Naive thymus-derived CD4-positive, alpha-beta T cell (primary cell): ENCODE measurements at regions of chr14 and their contacts with region 1.

Region 1: DNA sequence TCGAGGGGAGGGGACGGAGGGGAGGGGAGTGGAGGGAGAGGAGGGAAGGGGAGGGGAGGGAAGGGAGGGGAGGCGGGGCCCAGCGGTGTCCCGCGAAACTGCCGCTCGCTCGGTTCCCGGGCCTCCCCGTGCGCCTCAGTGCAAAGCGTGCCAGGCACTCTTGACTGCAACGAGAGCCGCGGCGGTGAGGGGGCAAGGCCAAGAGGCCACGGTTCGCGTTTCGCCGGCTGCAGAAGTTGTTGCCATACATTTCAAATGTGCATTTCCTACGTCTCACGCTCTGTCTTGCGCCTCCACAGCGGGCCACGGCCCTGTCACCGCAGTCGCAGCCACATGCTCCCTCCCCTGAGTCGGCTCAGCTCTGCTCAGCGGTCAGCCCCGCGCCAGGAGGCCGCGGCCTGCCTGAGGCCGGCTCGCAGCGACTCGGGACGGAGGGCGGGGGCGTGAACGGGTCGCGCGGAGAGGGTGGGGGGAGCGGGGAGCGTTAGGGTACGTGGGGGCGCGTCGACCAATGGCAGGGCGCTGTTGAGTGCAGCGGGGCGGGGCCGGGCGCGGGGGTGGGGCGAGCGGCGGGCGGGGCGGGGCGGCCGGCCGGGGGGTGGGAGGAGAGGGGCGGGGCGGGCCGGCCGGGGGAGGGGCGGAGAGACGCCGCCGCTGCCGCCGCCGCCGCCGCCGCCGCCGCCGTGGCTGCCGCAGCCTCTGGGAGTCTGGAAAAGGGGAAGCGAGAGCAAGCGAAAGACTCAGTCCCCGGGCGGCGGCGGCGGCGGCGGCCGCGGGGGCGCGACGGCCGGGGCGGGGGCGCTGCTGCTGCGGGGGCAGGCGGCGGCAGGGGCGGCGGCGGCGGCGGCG is at the start of gene PPP2R5C:
- DNase-seq: peak; percentile 73 to 90 (median 87)
- ATAC-seq: peak; percentile 73
- H3K4me3 ChIP-seq: peak within 1 kb of the TSS; percentile 94
- H3K4me3 Mint-ChIP-seq: peak within 1 kb of the TSS; percentile 89 to 96 (median 93)
- H3K27ac ChIP-seq: peak within 1 kb of the TSS; percentile 91
- H3K27ac Mint-ChIP-seq: peak within 1 kb of the TSS; percentile 69 to 95 (median 91)
- H3K4me1 ChIP-seq: peaks cover 11 to 14% of the 10 kb centered on the region in 2 donors
- H3K4me1 Mint-ChIP-seq: peaks cover 30 to 56% (median 38%) of the 10 kb centered on the region in 7 donors
- H3K27me3 ChIP-seq: no peaks in the 10 kb centered on the region
- H3K27me3 Mint-ChIP-seq: peaks cover 0 to 11% (median 0%) of the 10 kb centered on the region in 5 donors
- total RNA-seq, gene PPP2R5C: 266 to 449 (median 405) TPM

Region 2: GRCh38 chr14:101687756-101688546 is 73.3 kb before region 1 on chr14:
- CTCF ChIA-PET with region 1: no interaction called
- POLR2A ChIA-PET with region 1: no interaction called
- intact Hi-C with region 1: no loop called
- DNase-seq: no peak
- ATAC-seq: no peak
- H3K4me3 ChIP-seq: no peak overlapping the region
- H3K4me3 Mint-ChIP-seq: no peak overlapping the region
- H3K27ac ChIP-seq: no peak overlapping the region
- H3K27ac Mint-ChIP-seq: no peak overlapping the region
- H3K4me1 ChIP-seq: no peaks in the 10 kb centered on the region
- H3K4me1 Mint-ChIP-seq: no peaks in the 10 kb centered on the region
- H3K27me3 ChIP-seq: no peaks in the 10 kb centered on the region
- H3K27me3 Mint-ChIP-seq: peaks cover 0 to 32% (median 0%) of the 10 kb centered on the region in 5 donors

Region 3: DNA sequence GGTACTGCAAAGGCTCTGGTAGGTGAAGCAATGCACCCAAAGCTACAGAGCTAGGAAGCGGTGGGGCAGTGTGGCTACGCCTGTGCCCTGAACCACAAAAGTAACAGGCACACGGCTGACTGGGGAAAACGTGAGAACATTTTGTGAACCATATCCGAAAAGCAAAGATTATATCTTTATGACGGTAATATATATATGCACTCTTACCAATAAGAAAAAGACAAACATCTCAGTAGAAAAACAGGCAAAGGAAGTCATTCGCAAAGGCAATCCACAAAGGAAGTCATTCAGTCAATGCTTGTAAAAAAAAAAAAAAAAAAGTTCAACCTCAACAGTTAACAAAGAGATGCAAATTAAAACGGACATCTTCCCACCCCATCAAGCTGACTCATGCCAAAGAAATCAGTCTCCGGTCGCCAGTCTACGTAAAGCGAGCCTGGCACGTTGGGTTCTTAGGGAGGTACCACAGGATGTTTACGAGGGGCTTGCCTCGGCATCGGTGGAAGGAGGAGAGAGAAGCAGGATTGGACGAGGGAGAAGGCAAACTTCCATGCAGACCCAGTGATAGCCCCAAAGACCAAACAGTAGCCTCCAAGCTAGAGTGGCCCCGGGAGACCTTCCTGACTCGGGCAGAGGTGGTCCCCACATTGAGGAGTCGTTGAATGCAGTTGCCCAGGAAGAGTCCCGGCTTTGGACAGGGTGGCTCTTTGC is 39.1 kb before region 1 on chr14:
- CTCF ChIA-PET with region 1: no interaction called
- POLR2A ChIA-PET with region 1: interaction called, 19 read pairs
- intact Hi-C with region 1: loop called in 1 of 2 experiments (anchors 1 kb)
- DNase-seq: peak; percentile 49 to 93 (median 88)
- ATAC-seq: peak; percentile 86
- H3K4me3 ChIP-seq: peak overlapping the region; percentile 24
- H3K4me3 Mint-ChIP-seq: peak overlapping the region; percentile 73 to 92 (median 80)
- H3K27ac ChIP-seq: peak overlapping the region; percentile 76
- H3K27ac Mint-ChIP-seq: peak overlapping the region; percentile 92 to 99 (median 97)
- H3K4me1 ChIP-seq: peaks cover 34 to 50% of the 10 kb centered on the region in 2 donors
- H3K4me1 Mint-ChIP-seq: peaks cover 17 to 74% (median 52%) of the 10 kb centered on the region in 7 donors
- H3K27me3 ChIP-seq: no peaks in the 10 kb centered on the region
- H3K27me3 Mint-ChIP-seq: no peaks in the 10 kb centered on the region

Region 4: DNA sequence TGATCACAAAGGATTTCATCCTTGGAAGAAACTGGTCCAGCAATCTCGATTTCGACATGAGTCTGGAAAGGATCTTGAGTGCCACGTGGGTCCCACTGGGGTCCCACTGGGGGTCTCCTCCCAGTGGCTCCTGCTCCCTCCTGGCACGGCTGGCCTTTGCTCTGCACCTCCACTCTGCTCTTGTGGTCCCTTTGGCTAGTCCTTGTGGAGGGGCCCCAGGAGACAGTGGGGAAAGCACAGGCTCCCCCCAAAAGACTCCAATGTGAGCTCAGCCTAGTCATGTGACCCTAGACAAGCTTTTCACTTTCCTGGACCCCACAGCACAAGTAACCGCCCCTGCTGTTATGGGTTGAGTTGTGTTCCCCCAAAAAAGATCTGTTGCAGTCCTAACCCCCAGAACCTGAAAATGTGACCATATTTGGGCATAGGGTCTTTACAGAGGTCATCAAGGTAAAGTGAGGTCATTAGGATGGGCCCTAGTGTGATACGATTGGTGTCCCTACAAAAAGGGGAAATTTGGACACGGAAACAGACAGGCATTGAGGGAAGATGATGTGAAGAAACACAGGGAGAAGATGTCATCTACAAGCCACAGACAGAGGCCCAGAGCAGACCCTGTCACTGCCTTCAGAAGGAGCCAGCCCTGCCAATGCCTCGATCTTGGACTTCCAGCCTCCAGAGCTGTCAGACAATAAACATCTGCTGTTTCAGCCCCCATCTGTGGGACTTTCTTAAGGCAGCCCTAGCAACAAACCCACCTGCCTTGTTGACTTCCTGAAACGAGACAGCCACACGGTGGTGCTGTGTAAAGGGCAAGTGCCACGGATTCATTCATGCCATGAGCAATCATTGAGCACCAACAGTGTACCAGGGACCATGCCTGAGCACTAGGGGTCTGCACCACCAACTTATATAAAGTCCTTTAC is 23.6 kb before region 1 on chr14:
- CTCF ChIA-PET with region 1: interaction called, 4 read pairs
- POLR2A ChIA-PET with region 1: interaction called, 4 read pairs
- intact Hi-C with region 1: loop called in 1 of 2 experiments (anchors 2 kb)
- DNase-seq: peak in 4 of 9 donors; percentile 21 to 27 (median 24)
- ATAC-seq: peak; percentile 65
- H3K4me3 ChIP-seq: no peak overlapping the region
- H3K4me3 Mint-ChIP-seq: no peak overlapping the region
- H3K27ac ChIP-seq: no peak overlapping the region
- H3K27ac Mint-ChIP-seq: peak overlapping the region in 6 of 9 donors; percentile 20 to 76 (median 62)
- H3K4me1 ChIP-seq: peaks cover 1 to 14% of the 10 kb centered on the region in 2 donors
- H3K4me1 Mint-ChIP-seq: peaks cover 0 to 24% (median 12%) of the 10 kb centered on the region in 7 donors
- H3K27me3 ChIP-seq: no peaks in the 10 kb centered on the region
- H3K27me3 Mint-ChIP-seq: no peaks in the 10 kb centered on the region

Region 5: GRCh38 chr14:101876555-101876938 is 115.3 kb after region 1 on chr14:
- CTCF ChIA-PET with region 1: no interaction called
- POLR2A ChIA-PET with region 1: interaction called, 3 read pairs
- intact Hi-C with region 1: loop called in 1 of 2 experiments (anchors 5 kb)
- DNase-seq: peak in 8 of 9 donors; percentile 42 to 85 (median 68)
- ATAC-seq: peak; percentile 94
- H3K4me3 ChIP-seq: no peak overlapping the region
- H3K4me3 Mint-ChIP-seq: peak overlapping the region; percentile 43 to 87 (median 76)
- H3K27ac ChIP-seq: peak overlapping the region; percentile 72
- H3K27ac Mint-ChIP-seq: peak overlapping the region; percentile 72 to 95 (median 89)
- H3K4me1 ChIP-seq: peaks cover 24 to 52% of the 10 kb centered on the region in 2 donors
- H3K4me1 Mint-ChIP-seq: peaks cover 42 to 96% (median 78%) of the 10 kb centered on the region in 7 donors
- H3K27me3 ChIP-seq: no peaks in the 10 kb centered on the region
- H3K27me3 Mint-ChIP-seq: no peaks in the 10 kb centered on the region

Region 6: GRCh38 chr14:102086972-102087761 is 325.9 kb after region 1 on chr14 and contains the start of gene HSP90AA1:
- CTCF ChIA-PET with region 1: interaction called, 6 read pairs
- POLR2A ChIA-PET with region 1: no interaction called
- intact Hi-C with region 1: loop called (anchors 1 kb)
- DNase-seq: peak; percentile 89 to 99 (median 94)
- ATAC-seq: peak; percentile 87
- H3K4me3 ChIP-seq: peak within 1 kb of the TSS; percentile 91
- H3K4me3 Mint-ChIP-seq: peak within 1 kb of the TSS; percentile 90 to 98 (median 96)
- H3K27ac ChIP-seq: peak within 1 kb of the TSS; percentile 98
- H3K27ac Mint-ChIP-seq: peak within 1 kb of the TSS; percentile 93 to 98 (median 96)
- H3K4me1 ChIP-seq: peaks cover 41 to 43% of the 10 kb centered on the region in 2 donors
- H3K4me1 Mint-ChIP-seq: peaks cover 44 to 70% (median 62%) of the 10 kb centered on the region in 7 donors
- H3K27me3 ChIP-seq: no peaks in the 10 kb centered on the region
- H3K27me3 Mint-ChIP-seq: no peaks in the 10 kb centered on the region
- total RNA-seq, gene HSP90AA1: 229 to 591 (median 361) TPM

Region 7: GRCh38 chr14:102304611-102305509 is 543.6 kb after region 1 on chr14 and contains the start of gene MOK:
- CTCF ChIA-PET with region 1: no interaction called
- POLR2A ChIA-PET with region 1: no interaction called
- intact Hi-C with region 1: loop called (anchors 1 to 2 kb)
- DNase-seq: peak; percentile 94 to 99 (median 98)
- ATAC-seq: peak; percentile 95
- H3K4me3 ChIP-seq: peak within 1 kb of the TSS; percentile 75
- H3K4me3 Mint-ChIP-seq: peak within 1 kb of the TSS; percentile 86 to 99 (median 96)
- H3K27ac ChIP-seq: peak within 1 kb of the TSS; percentile 81
- H3K27ac Mint-ChIP-seq: peak within 1 kb of the TSS; percentile 87 to 99 (median 95)
- H3K4me1 ChIP-seq: peaks cover 0 to 2% of the 10 kb centered on the region in 2 donors
- H3K4me1 Mint-ChIP-seq: peaks cover 0 to 16% (median 13%) of the 10 kb centered on the region in 7 donors
- H3K27me3 ChIP-seq: no peaks in the 10 kb centered on the region
- H3K27me3 Mint-ChIP-seq: peaks cover 0 to 16% (median 0%) of the 10 kb centered on the region in 5 donors
- total RNA-seq, gene MOK: 1.3 to 3.5 (median 1.9) TPM